Left lung (tissue), 14 donors: ENCODE measurements at regions of chr17 and their contacts with region 1.

Region 1: DNA sequence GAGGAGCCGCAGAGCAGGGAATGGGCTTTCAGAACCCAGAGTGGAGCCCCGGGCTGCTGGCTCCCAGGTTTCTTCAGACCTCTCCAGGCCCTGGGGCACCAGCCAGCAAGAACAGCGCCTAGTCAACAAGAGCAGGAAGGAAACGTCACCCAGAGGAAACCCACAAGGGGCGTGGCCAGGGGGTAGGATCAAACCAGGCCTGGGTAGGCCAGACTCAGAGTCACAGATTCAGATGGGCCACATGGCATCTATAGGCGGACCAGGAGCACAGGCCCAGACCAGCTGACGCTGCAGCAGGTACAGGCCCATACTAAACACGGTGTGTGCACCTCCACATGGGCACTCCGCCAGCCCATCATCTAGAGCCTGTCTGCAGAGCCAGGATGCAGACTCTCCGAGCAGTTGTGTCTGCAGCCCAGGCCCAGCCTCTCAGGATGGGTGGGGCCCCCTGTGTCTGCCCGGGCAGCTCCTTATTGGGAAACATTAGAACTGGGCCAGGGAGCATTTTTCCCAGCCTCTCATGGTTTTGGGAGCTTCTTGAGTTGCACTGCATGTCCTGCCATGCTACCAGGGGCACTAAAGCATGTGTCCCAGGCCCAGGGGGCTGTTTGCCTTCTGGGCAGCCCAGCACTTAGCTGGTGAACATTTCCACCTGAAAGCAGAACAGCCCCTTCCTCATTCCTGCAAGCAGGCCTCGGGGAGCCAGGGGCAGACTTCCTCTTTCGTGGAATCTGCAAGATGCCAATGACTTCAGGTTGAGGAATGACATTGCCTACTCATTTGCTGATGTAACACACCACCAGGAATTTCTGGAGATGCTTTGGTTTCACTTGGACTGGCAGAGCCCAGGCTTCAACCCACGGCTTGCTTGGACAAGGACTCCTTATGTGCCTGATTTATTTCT is at the start of gene NLRP1:
- DNase-seq: peak; percentile 29 to 95 (median 68)
- ATAC-seq: peak; percentile 92
- H3K4me3 ChIP-seq: peak within 1 kb of the TSS; percentile 36 to 54
- H3K27ac ChIP-seq: peak within 1 kb of the TSS; percentile 79 to 84
- H3K4me1 ChIP-seq: peaks cover 10 to 64% of the 10 kb centered on the region in 2 donors
- H3K27me3 ChIP-seq: no peaks in the 10 kb centered on the region
- CTCF ChIP-seq: no peak
- polyA plus RNA-seq, gene NLRP1: 28.9 to 36.4 (median 31.8) TPM

Region 2: DNA sequence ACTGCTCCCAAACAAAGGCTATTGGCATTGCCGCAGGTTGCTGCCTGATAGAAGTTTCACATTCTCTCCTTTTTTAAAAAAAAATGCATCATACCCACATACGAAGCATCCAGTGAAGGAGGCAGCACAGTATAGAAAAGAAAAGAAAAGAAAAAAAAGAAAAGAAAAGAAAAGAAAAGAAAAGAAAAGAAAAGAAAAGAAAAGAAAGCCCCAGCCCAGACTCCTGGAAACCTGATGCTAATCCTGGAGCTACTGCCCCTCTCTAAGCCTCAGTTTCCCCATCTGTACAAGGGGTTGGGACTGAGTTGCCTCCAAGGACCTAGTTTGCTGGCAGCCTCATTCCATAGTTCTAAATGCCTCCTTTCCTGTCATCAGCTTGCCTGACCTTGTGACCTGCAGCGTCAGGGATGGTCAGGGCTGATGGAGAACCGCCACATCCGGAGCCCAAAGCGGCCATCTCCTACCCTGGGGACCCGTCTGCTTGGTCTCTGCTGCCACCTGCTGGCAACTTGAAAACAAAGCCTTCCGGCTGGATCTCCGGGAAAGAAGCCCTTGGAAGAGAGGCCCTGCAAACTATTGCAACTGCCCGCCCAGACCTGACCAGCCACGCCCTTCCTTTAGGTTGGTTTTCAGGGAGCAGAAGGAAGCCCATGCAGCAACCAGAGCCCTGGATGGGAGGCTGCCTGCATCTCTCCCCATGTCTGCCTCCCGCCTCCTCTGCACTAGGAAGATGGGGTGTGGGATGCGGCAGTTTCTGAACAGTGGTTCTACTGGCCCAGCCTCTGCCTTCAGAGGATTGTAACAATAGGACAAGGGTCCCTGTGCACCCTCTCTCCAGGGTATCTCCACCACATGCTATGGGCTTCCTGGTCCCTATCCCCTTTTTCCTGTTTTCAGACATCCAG is 837.3 kb after region 1 on chr17:
- intact Hi-C with region 1: loop called in 1 of 2 experiments (anchors 5 kb)
- DNase-seq: peak; percentile 49 to 89 (median 79)
- ATAC-seq: peak; percentile 95
- H3K4me3 ChIP-seq: no peak overlapping the region
- H3K27ac ChIP-seq: no peak overlapping the region
- H3K4me1 ChIP-seq: no peaks in the 10 kb centered on the region
- H3K27me3 ChIP-seq: peaks cover 0 to 85% of the 10 kb centered on the region in 2 donors
- CTCF ChIP-seq: peak; percentile 64 to 87

Region 3: GRCh38 chr17:6435968-6436367 is 851.3 kb after region 1 on chr17:
- intact Hi-C with region 1: loop called in 1 of 2 experiments (anchors 5 kb)
- DNase-seq: peak in 2 of 4 donors; percentile 60 to 61
- ATAC-seq: peak; percentile 98
- H3K4me3 ChIP-seq: no peak overlapping the region
- H3K27ac ChIP-seq: no peak overlapping the region
- H3K4me1 ChIP-seq: no peaks in the 10 kb centered on the region
- H3K27me3 ChIP-seq: peaks cover 0 to 59% of the 10 kb centered on the region in 2 donors
- CTCF ChIP-seq: peak; percentile 72 to 91